ENCODE measurements at regions of chr1 and their contacts with region 1.

Region 1: GRCh38 chr1:19010995-19011844 is 54.7 kb upstream of the IFFO2 start:
- DNase-seq: peak; percentile 63 to 95
- H3K4me3 ChIP-seq: peak overlapping the region in 1 of 2 donors; percentile 6
- H3K27ac ChIP-seq: peak overlapping the region; percentile 85 to 92
- H3K4me1 ChIP-seq: peaks cover 17 to 24% of the 10 kb centered on the region in 2 donors
- H3K27me3 ChIP-seq: no peaks in the 10 kb centered on the region
- CTCF ChIP-seq: no peak

Region 2: DNA sequence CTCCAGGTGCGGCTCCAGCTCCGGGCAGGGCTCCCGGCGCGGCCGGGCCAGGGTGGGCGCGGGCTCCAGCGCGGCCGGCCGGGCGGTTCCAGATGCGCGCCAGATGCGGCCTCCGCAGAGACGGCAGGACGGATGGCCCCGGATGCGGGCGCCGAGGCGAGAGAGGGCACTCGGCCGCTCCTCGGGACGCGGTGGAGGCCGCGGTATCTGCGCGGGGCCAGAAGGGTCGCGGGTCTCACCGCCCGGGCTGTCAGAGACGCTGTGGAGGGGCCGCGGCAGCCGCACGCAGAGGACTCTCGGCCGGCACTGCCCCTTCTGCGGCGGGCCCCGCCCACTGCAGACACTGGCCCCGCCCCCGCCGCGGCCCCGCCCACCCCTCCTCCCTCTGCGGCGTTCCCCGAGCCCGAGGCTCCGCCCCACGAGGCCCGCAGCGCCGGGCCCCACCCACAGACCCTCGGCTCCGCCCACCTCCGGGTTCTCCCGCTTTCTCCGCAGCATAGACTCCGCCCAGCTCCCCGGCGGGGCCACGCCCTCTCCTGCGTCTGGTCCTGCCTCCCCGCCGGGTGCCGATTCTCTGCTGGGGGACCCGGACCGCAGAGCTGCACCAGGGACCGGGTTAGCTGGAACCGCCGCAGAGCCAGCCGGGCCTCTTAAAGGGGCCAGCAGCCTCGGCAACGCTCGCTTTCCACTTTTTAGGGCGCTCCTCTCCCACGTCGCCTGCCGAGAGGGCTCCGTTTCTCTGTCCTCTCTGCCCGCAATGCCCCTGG is 54.7 kb before region 1 on chr1 and contains the start of gene IFFO2:
- intact Hi-C with region 1: loop called (anchors 2 kb)
- DNase-seq: peak; percentile 83 to 99
- H3K4me3 ChIP-seq: peak within 1 kb of the TSS; percentile 94 to 98
- H3K27ac ChIP-seq: peak within 1 kb of the TSS; percentile 94 to 97
- H3K4me1 ChIP-seq: peaks cover 3 to 24% of the 10 kb centered on the region in 2 donors
- H3K27me3 ChIP-seq: no peaks in the 10 kb centered on the region
- CTCF ChIP-seq: peak in 1 of 3 experiments; percentile 10
- total RNA-seq, gene IFFO2: 131 TPM

Region 3: GRCh38 chr1:18972531-18972930 is 38.7 kb before region 1 on chr1:
- intact Hi-C with region 1: loop called (anchors 2 kb)
- DNase-seq: peak in 1 of 2 donors; percentile 66
- H3K4me3 ChIP-seq: no peak overlapping the region
- H3K27ac ChIP-seq: no peak overlapping the region
- H3K4me1 ChIP-seq: no peaks in the 10 kb centered on the region
- H3K27me3 ChIP-seq: no peaks in the 10 kb centered on the region
- CTCF ChIP-seq: peak; percentile 29 to 69 (median 61)

Region 4: GRCh38 chr1:18999359-18999758 is 11.9 kb before region 1 on chr1:
- intact Hi-C with region 1: loop called (anchors 1 kb)
- DNase-seq: peak in 1 of 2 donors; percentile 83
- H3K4me3 ChIP-seq: no peak overlapping the region
- H3K27ac ChIP-seq: peak overlapping the region; percentile 72 to 78
- H3K4me1 ChIP-seq: peaks cover 0 to 22% of the 10 kb centered on the region in 2 donors
- H3K27me3 ChIP-seq: no peaks in the 10 kb centered on the region
- CTCF ChIP-seq: no peak

Region 5: GRCh38 chr1:19033861-19034680 is 22.9 kb after region 1 on chr1:
- intact Hi-C with region 1: no loop called
- DNase-seq: peak in 1 of 2 donors; percentile 51
- H3K4me3 ChIP-seq: no peak overlapping the region
- H3K27ac ChIP-seq: no peak overlapping the region
- H3K4me1 ChIP-seq: no peaks in the 10 kb centered on the region
- H3K27me3 ChIP-seq: no peaks in the 10 kb centered on the region
- CTCF ChIP-seq: no peak

Region 6: GRCh38 chr1:19203440-19203839 is 192.2 kb after region 1 on chr1:
- intact Hi-C with region 1: no loop called
- DNase-seq: peak in 1 of 2 donors; percentile 86
- H3K4me3 ChIP-seq: peak overlapping the region in 1 of 2 donors; percentile 3
- H3K27ac ChIP-seq: peak overlapping the region; percentile 49 to 71
- H3K4me1 ChIP-seq: peaks cover 17 to 42% of the 10 kb centered on the region in 2 donors
- H3K27me3 ChIP-seq: no peaks in the 10 kb centered on the region
- CTCF ChIP-seq: no peak

Region 7: DNA sequence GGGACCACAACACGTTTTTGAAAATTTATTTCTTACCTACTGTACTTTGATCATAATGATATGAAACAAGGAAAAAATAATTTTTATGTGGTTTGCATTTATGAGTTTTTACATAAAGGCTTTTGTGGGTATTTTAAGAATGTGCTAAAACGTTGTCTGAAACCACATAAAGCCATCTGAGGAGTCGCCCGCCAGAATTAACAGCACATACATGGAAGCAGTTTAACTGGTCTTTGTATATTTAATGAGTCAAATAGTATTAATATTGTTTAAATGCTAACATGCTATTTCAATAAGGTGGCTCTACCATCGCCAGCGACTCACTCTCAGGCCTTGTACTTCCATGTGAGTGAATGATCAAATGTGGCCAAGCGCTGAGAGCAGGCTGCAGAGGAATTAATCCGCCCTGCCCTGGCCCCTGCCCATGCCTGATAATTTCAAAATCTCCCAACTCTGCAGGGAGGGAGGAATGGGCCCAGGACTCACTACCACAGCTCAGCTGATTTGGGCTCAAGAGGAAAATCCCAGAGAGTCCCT is 350.5 kb after region 1 on chr1:
- intact Hi-C with region 1: no loop called
- DNase-seq: no peak
- H3K4me3 ChIP-seq: no peak overlapping the region
- H3K27ac ChIP-seq: no peak overlapping the region
- H3K4me1 ChIP-seq: peaks cover 0 to 3% of the 10 kb centered on the region in 2 donors
- H3K27me3 ChIP-seq: no peaks in the 10 kb centered on the region
- CTCF ChIP-seq: no peak